ENCODE measurements at regions of chr10 and their contacts with region 1.

Region 1: GRCh38 chr10:1715836-1716245 is 21.5 kb downstream of the ADARB2 start:
- DNase-seq: peak; percentile 36
- H3K4me3 Mint-ChIP-seq: no peak overlapping the region
- H3K27ac Mint-ChIP-seq: no peak overlapping the region
- H3K4me1 Mint-ChIP-seq: no peaks in the 10 kb centered on the region
- H3K27me3 Mint-ChIP-seq: peaks cover 17% of the 10 kb centered on the region
- CTCF ChIP-seq: no peak

Region 2: DNA sequence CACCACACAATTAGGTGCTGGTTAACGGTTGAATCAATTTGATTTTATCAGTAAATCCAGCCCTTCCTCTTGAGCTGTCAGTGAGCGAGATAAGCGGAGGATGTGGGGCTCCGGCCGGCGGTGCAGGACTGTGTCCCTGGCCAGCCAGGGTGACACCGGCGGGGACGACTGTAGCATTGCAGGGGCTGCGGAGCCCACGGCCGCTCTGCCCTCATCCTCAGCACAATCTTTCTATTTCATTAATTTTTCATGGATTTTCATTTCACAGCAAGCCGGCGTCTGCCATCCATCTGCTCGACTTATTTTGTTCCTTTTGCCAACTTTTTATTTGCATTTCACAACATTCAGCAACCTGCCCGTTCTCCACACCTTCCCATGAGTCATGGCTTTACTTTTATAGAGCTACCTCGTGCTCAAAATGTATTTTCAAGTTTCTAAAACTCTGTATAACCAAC is 16.8 kb after region 1 on chr10:
- CTCF ChIA-PET with region 1: no interaction called
- intact Hi-C with region 1: loop called (anchors 1 kb)
- DNase-seq: no peak
- H3K4me3 Mint-ChIP-seq: no peak overlapping the region
- H3K27ac Mint-ChIP-seq: no peak overlapping the region
- H3K4me1 Mint-ChIP-seq: no peaks in the 10 kb centered on the region
- H3K27me3 Mint-ChIP-seq: peaks cover 33% of the 10 kb centered on the region
- CTCF ChIP-seq: no peak

Measured in Calu3 (cell line).